ENCODE measurements at regions of chr17 and their contacts with region 1.

Region 1: GRCh38 chr17:67717624-67718329 is at the start of gene NOL11:
- DNase-seq: peak; percentile 97
- ATAC-seq: peak; percentile 95
- H3K4me3 ChIP-seq: peak within 1 kb of the TSS; percentile 95
- H3K27ac ChIP-seq: peak within 1 kb of the TSS; percentile 91
- H3K4me1 ChIP-seq: peaks cover 6% of the 10 kb centered on the region
- H3K27me3 ChIP-seq: no peaks in the 10 kb centered on the region
- CTCF ChIP-seq: peak; percentile 94 to 99 (median 96); a peak in 5 of 6 replicates
- EP300 ChIP-seq: no peak
- POLR2A ChIP-seq: peak; percentile 91
- RAD21 ChIP-seq: peak; percentile 56
- polyA plus RNA-seq, gene NOL11: 92.6 to 130 TPM

Region 2: DNA sequence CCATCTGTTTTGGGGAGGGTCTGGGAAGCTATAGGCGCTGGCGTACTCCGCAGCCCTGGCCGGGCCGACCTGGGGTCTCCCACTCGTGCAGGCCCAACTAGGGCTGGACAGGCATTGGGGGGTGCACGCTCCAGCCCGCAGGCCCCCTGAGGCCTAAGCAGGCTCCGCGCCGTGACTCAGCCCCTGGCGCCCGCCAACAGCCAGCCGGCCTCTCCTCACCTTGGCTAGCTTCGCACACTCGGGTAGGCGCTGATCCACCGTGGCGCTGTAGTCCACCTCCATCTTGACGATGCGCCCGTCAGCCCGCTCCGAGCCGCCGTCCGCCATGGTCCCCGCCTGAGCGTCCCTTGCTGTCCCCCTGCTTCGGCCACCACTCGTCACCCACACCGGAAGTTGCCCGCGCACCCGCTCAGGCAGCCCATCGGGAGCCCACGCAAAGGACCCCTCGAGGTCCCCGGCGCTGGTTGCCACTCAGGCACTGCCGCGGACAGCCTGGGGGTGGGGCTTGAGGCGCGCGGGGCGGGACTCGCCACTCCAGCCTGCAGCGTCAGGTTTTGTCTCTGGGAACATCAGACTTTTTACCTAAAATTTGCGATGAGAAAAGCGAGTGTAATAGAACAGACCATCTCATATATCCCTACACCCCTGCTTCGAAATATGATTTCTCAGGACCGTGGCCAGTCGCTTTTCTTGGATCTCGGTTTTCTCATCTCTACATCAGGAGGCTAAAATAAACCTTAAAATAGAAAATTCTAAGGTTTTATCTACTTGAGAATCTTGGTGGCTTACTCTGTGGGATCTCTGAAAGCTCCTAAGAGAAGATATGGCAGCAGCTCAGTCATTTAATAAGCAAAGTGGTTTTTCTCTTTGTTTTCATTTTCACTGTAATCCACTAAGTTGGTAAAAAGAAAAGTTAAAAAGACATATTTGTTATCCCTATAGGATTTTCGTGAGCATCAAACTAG is 351.3 kb before region 1 on chr17 and contains the start of gene PSMD12:
- CTCF ChIA-PET with region 1: no interaction called
- POLR2A ChIA-PET with region 1: interaction called, 3 read pairs
- RAD21 ChIA-PET with region 1: no interaction called
- SMC1A ChIA-PET with region 1: interaction called, 3 read pairs
- in situ Hi-C with region 1: loop called (anchors 5 kb)
- intact Hi-C with region 1: loop called (anchors 10 kb)
- DNase-seq: peak; percentile 63
- ATAC-seq: peak; percentile 94
- H3K4me3 ChIP-seq: peak within 1 kb of the TSS; percentile 98
- H3K27ac ChIP-seq: peak within 1 kb of the TSS; percentile 80
- H3K4me1 ChIP-seq: peaks cover 6% of the 10 kb centered on the region; the same call in 1 of the 2 replicates
- H3K27me3 ChIP-seq: no peaks in the 10 kb centered on the region
- CTCF ChIP-seq: no peak
- EP300 ChIP-seq: no peak
- POLR2A ChIP-seq: peak; percentile 99
- RAD21 ChIP-seq: no peak
- polyA plus RNA-seq, gene PSMD12: 21.2 to 33.0 TPM

Region 3: GRCh38 chr17:67637917-67638641 is 79.7 kb before region 1 on chr17:
- CTCF ChIA-PET with region 1: no interaction called
- POLR2A ChIA-PET with region 1: no interaction called
- RAD21 ChIA-PET with region 1: no interaction called
- SMC1A ChIA-PET with region 1: no interaction called
- in situ Hi-C with region 1: no loop called
- intact Hi-C with region 1: no loop called
- DNase-seq: no peak
- ATAC-seq: no peak
- H3K4me3 ChIP-seq: no peak overlapping the region
- H3K27ac ChIP-seq: no peak overlapping the region
- H3K4me1 ChIP-seq: no peaks in the 10 kb centered on the region
- H3K27me3 ChIP-seq: no peaks in the 10 kb centered on the region
- CTCF ChIP-seq: no peak
- EP300 ChIP-seq: no peak
- POLR2A ChIP-seq: no peak
- RAD21 ChIP-seq: no peak

Region 4: GRCh38 chr17:67656494-67657203 is 61.1 kb before region 1 on chr17:
- CTCF ChIA-PET with region 1: no interaction called
- POLR2A ChIA-PET with region 1: interaction called, 3 read pairs
- RAD21 ChIA-PET with region 1: no interaction called
- SMC1A ChIA-PET with region 1: interaction called, 10 read pairs
- in situ Hi-C with region 1: no loop called
- intact Hi-C with region 1: loop called (anchors 2 kb)
- DNase-seq: peak; percentile 51
- ATAC-seq: peak; percentile 86
- H3K4me3 ChIP-seq: no peak overlapping the region
- H3K27ac ChIP-seq: peak overlapping the region; percentile 88
- H3K4me1 ChIP-seq: peaks cover 42% of the 10 kb centered on the region
- H3K27me3 ChIP-seq: no peaks in the 10 kb centered on the region
- CTCF ChIP-seq: no peak
- EP300 ChIP-seq: peak; percentile 42 to 66; a peak in 2 of 4 replicates
- POLR2A ChIP-seq: no peak
- RAD21 ChIP-seq: peak; percentile 5; the same call in 1 of the 2 replicates

Region 5: DNA sequence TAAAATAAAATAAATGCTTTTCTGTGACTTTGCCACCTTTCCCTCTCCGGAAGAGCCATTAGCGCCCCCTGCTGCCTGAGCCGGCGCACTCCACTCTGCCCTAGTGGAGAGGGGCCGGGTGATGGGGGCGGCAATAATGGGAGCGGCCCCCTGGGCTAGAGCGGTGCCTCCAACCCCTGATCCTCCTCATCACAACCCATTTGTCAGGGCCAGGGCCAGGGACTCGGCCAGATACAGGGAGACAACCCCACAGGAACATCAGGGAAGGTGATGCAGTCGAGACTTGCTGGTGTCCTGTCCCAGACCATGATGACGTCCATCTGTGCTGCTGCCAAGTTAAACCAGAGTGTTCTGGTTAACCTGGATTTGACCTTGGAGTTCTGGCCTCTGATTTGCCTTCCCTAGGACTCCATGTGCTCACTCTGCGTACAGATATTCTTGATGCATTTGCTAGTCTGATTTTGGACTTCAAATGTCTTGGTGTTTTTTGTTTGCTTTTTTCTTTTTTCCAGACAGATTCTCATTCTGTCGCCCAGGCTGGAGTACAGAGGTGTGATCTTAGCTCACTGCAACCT is 61.4 kb after region 1 on chr17:
- CTCF ChIA-PET with region 1: interaction called, 12 read pairs
- POLR2A ChIA-PET with region 1: no interaction called
- RAD21 ChIA-PET with region 1: no interaction called
- SMC1A ChIA-PET with region 1: no interaction called
- in situ Hi-C with region 1: no loop called
- intact Hi-C with region 1: no loop called
- DNase-seq: no peak
- ATAC-seq: peak; percentile 94
- H3K4me3 ChIP-seq: no peak overlapping the region
- H3K27ac ChIP-seq: no peak overlapping the region
- H3K4me1 ChIP-seq: no peaks in the 10 kb centered on the region
- H3K27me3 ChIP-seq: no peaks in the 10 kb centered on the region; a peak in 1 of 4 replicates
- CTCF ChIP-seq: peak; percentile 37 to 76 (median 65)
- EP300 ChIP-seq: no peak
- POLR2A ChIP-seq: no peak
- RAD21 ChIP-seq: peak; percentile 62

Region 6: GRCh38 chr17:69117855-69118784 is 1400.3 kb after region 1 on chr17:
- CTCF ChIA-PET with region 1: no interaction called
- POLR2A ChIA-PET with region 1: interaction called, 12 read pairs
- RAD21 ChIA-PET with region 1: no interaction called
- SMC1A ChIA-PET with region 1: no interaction called
- in situ Hi-C with region 1: no loop called
- intact Hi-C with region 1: no loop called
- DNase-seq: peak; percentile 47
- ATAC-seq: peak; percentile 60
- H3K4me3 ChIP-seq: peak overlapping the region; percentile 27
- H3K27ac ChIP-seq: peak overlapping the region; percentile 93
- H3K4me1 ChIP-seq: peaks cover 22% of the 10 kb centered on the region
- H3K27me3 ChIP-seq: no peaks in the 10 kb centered on the region
- CTCF ChIP-seq: no peak
- EP300 ChIP-seq: peak; percentile 49 to 53; a peak in 3 of 4 replicates
- POLR2A ChIP-seq: no peak
- RAD21 ChIP-seq: no peak